AG04450 (cell line): ENCODE measurements at regions of chr11 and their contacts with region 1.

Region 1: GRCh38 chr11:119205574-119206510 is at the start of gene CBL:
- DNase-seq: peak; percentile 64
- H3K4me3 ChIP-seq: peak within 1 kb of the TSS; percentile 93
- H3K27ac ChIP-seq: peak within 1 kb of the TSS; percentile 61
- H3K27me3 ChIP-seq: peaks cover 2% of the 10 kb centered on the region
- CTCF ChIP-seq: peak; percentile 87
- polyA plus RNA-seq, gene CBL: 19.9 and 24.3 TPM in 2 replicates

Region 2: DNA sequence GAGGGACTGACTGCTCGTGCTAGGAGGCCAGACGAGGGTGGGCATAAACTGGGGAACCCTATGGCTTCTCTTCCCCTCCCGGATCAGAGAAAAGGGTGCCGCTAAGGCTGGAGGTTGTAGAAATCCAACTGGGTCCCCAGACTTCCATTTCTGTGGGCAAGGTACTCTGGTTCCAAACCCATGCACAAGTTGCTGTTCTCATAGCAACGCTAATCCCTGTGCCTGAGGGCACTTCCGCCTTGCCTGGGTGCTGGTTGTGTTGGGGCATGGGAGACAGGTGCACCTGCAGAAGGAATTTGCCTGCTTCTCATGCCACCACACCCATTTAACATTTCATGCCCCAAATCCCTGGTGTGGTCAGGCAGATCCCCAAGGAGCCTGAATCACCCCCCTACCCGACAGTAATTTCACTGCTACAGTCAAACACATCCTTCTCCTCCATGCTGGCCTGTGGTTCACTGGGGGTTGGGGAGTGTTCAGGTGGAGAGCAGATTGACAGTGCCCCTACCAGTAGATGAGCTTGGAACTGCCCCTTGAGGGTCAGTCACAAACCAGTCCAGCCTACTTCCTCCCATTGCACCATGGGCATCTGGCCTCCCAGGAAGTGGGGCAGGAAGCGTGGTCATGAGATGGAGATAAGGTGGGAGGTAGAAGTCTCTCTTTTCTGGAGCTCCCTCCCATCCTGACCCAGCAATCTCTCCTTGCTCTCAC is 97.5 kb before region 1 on chr11:
- CTCF ChIA-PET with region 1: interaction called, 11 read pairs
- POLR2A ChIA-PET with region 1: no interaction called
- DNase-seq: no peak
- H3K4me3 ChIP-seq: peak overlapping the region; percentile 80
- H3K27ac ChIP-seq: no peak overlapping the region
- H3K27me3 ChIP-seq: no peaks in the 10 kb centered on the region
- CTCF ChIP-seq: no peak

Region 3: DNA sequence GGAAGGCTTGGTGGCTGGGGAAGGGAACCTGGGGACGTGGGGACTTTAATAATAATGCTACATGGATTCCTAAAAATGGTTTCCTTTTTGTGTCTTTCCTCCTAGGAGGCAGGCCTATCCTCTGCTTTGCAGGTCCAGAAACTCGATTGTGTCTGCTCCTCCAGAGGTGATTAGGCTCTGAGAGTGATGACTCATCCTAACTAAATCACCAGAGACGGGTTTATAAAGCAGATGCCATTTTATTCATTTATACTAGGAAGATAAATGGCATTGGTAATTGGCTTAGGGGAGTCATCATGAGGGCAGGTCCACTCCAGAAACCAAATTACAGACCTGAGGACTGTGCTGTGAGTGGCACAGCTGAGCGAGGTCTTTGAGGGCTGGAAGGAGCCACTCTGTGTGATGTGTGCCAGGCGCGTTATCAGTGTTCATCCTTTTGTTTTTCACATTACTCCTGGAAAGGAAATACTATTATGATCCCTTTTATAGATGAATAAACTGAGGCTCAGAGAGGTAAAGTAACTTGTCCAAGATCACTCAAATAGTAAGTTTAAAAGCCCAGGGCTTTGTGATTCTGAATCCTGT is 30.3 kb before region 1 on chr11:
- CTCF ChIA-PET with region 1: interaction called, 26 read pairs
- POLR2A ChIA-PET with region 1: no interaction called
- DNase-seq: no peak
- H3K4me3 ChIP-seq: no peak overlapping the region
- H3K27ac ChIP-seq: no peak overlapping the region
- H3K27me3 ChIP-seq: no peaks in the 10 kb centered on the region
- CTCF ChIP-seq: no peak

Region 4: DNA sequence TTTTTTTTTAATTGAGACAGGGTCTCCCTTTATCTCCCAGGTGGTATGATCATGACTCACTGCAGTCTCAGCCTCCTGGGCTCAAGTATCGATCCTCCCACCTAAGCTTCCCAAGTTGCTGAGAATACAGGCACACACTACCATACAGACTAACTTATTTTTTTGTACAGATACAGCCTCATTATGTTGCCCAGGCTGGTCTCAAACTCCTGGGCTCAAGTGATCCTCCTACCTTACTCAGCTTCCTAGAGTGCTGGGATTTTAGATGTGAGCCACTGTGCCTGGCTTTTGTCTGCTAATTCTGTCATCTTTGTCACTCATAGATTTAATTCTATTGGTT is 43.8 kb after region 1 on chr11:
- CTCF ChIA-PET with region 1: interaction called, 33 read pairs
- POLR2A ChIA-PET with region 1: no interaction called
- DNase-seq: no peak
- H3K4me3 ChIP-seq: no peak overlapping the region
- H3K27ac ChIP-seq: no peak overlapping the region
- H3K27me3 ChIP-seq: no peaks in the 10 kb centered on the region
- CTCF ChIP-seq: no peak

Region 5: DNA sequence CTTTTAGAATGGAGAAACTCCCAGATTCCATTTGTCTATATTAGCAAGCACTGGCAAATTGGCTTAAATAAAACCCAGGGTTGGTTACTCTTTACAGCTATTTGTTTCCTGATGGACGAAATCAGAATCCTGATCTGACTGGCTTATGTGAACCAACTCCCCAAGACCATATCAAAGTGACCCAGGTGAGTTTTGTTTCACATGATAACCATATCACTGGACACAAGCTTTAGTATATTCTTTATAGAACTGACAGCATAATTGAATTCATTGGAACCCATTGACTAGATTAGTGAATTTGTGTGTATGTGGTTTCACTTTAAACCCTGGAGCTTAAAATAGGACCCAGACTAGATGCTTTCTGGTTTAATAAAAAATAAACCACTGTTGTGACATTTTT is 71.8 kb after region 1 on chr11:
- CTCF ChIA-PET with region 1: interaction called, 22 read pairs
- POLR2A ChIA-PET with region 1: interaction called, 3 read pairs
- DNase-seq: no peak
- H3K4me3 ChIP-seq: no peak overlapping the region
- H3K27ac ChIP-seq: no peak overlapping the region
- H3K27me3 ChIP-seq: no peaks in the 10 kb centered on the region
- CTCF ChIP-seq: no peak

Region 6: GRCh38 chr11:119306373-119306890 is 100.6 kb after region 1 on chr11:
- CTCF ChIA-PET with region 1: interaction called, 13 read pairs
- POLR2A ChIA-PET with region 1: no interaction called
- DNase-seq: no peak
- H3K4me3 ChIP-seq: no peak overlapping the region
- H3K27ac ChIP-seq: peak overlapping the region; percentile 39
- H3K27me3 ChIP-seq: no peaks in the 10 kb centered on the region
- CTCF ChIP-seq: no peak

Region 7: DNA sequence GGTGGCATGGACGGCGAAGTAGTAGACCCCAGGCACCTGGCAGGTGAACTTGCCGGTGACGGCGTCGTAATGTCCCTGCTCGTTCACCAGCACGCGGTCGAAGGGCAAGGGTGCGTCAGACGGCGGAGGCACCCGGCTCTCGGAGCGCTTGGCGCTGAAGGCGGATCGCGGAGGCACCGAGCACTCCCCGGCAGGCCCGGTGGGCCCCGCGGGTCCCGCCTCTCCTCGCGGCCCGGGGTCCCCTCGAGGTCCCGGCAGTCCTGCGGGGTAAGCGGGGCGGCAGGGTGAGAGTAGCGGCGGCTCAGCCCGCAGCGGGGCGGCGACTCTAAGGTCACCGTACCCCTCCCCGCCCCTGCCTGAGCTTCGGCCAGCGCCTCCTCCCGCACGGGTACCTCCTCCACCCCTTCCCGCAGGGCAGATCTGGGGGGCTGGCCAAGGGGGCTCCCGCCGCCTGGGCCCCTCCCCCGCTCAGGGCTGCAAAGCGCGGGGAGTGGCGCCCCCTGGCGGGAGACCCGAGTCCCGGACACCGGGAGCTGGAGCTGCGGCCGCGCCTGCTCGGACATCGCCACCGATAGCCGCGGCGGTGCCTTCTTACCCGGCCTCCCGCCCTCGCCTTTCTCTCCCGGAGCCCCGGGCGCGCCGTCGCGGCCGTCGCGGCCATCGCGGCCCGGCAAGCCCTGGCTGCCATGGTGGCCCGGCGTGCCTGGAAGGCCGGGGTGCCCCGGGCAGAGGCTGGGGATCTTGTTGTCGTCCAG is 133.9 kb after region 1 on chr11:
- CTCF ChIA-PET with region 1: interaction called, 27 read pairs
- POLR2A ChIA-PET with region 1: interaction called, 12 read pairs
- DNase-seq: no peak
- H3K4me3 ChIP-seq: peak overlapping the region; percentile 64
- H3K27ac ChIP-seq: peak overlapping the region; percentile 39
- H3K27me3 ChIP-seq: peaks cover 15% of the 10 kb centered on the region
- CTCF ChIP-seq: peak; percentile 83